ENCODE measurements at regions of chr3 and their contacts with region 1.

Region 1: GRCh38 chr3:192957441-192958021 is 39.9 kb upstream of the MB21D2 start:
- DNase-seq: peak; percentile 92
- H3K4me3 ChIP-seq: peak overlapping the region in 2 of 3 experiments; percentile 18 to 25
- H3K27ac ChIP-seq: peak overlapping the region; percentile 67
- H3K4me1 ChIP-seq: peaks cover 17% of the 10 kb centered on the region
- H3K27me3 ChIP-seq: no peaks in the 10 kb centered on the region
- CTCF ChIP-seq: no peak

Region 2: DNA sequence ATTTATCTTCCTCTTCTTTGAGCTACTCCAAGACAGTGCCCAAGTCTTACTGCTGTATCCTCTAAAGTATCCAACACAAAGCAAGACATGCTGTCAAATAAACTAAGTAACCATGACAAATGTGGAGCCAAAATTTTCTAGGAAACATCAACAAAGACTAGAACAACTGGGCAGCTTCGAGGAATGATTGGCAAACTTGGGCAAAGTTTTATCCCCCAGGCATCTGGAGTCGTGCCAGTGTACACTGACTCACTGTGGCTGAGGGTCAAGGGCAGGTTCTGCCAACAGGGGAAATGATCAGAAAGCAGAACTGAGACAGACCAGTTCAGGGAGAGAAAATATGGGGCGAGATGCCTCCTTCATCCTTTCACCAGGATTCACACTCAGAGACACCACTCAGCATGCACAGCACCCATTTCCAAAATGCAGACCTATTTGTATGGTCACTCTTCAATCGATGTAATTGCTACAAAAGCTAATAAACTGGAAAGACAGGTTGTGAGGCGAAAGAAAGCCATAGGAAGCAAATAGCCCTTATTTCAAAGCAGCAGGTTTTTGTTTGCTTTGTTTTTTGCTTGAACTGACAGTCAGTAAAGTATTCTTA is 105.6 kb before region 1 on chr3:
- CTCF ChIA-PET with region 1: no interaction called
- dilution Hi-C with region 1: loop called (anchors 5 kb)
- in situ Hi-C with region 1: no loop called
- intact Hi-C with region 1: no loop called
- DNase-seq: peak; percentile 93
- H3K4me3 ChIP-seq: no peak overlapping the region
- H3K27ac ChIP-seq: peak overlapping the region; percentile 90
- H3K4me1 ChIP-seq: peaks cover 27% of the 10 kb centered on the region
- H3K27me3 ChIP-seq: no peaks in the 10 kb centered on the region
- CTCF ChIP-seq: no peak

Measured in mammary epithelial cell (primary cell).